ENCODE measurements at regions of chr2 and their contacts with region 1.

Region 1: GRCh38 chr2:171404261-171404660 is 29.5 kb downstream of the METTL8 start:
- DNase-seq: no peak
- H3K4me3 Mint-ChIP-seq: no peak overlapping the region
- H3K27ac Mint-ChIP-seq: no peak overlapping the region
- H3K4me1 Mint-ChIP-seq: peaks cover 46% of the 10 kb centered on the region
- H3K27me3 Mint-ChIP-seq: no peaks in the 10 kb centered on the region

Region 2: DNA sequence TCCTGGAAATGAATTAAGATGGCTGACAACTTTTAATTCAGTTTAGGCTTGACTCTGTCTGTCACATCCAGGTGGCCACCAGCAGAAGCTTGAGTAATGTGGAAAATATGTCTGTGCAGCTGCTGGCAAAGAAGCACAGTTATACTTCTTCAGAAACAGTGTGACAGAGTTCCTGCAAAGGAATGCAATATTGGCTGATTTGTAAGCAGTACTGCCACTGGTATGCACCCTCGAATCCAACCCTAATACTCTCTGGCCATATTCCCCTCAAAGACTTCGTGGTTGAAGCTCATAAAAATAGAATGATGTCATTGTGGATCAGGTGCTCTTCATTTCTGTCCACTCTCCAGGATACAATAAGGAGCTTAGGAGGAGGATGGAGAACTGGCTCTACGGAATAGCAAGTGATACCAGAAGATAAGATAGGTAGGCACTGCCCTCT is 56.6 kb before region 1 on chr2:
- CTCF ChIA-PET with region 1: no interaction called
- POLR2A ChIA-PET with region 1: no interaction called
- intact Hi-C with region 1: loop called (anchors 5 kb)
- DNase-seq: peak; percentile 39
- H3K4me3 Mint-ChIP-seq: no peak overlapping the region
- H3K27ac Mint-ChIP-seq: peak overlapping the region; percentile 65
- H3K4me1 Mint-ChIP-seq: peaks cover 31% of the 10 kb centered on the region
- H3K27me3 Mint-ChIP-seq: no peaks in the 10 kb centered on the region

Region 3: GRCh38 chr2:171390941-171391516 is 13.2 kb before region 1 on chr2:
- CTCF ChIA-PET with region 1: no interaction called
- POLR2A ChIA-PET with region 1: no interaction called
- intact Hi-C with region 1: loop called (anchors 1 kb)
- DNase-seq: peak; percentile 59
- H3K4me3 Mint-ChIP-seq: no peak overlapping the region
- H3K27ac Mint-ChIP-seq: no peak overlapping the region
- H3K4me1 Mint-ChIP-seq: peaks cover 22% of the 10 kb centered on the region
- H3K27me3 Mint-ChIP-seq: no peaks in the 10 kb centered on the region